PC-9 (cell line): ENCODE measurements at regions of chr1 and their contacts with region 1.

Region 1: GRCh38 chr1:208132287-208132883 is 111.8 kb downstream of the PLXNA2 start:
- DNase-seq: peak; percentile 75 to 90
- H3K4me3 ChIP-seq: peak overlapping the region; percentile 9; the same call in 1 of the 2 replicates
- H3K27ac ChIP-seq: peak overlapping the region; percentile 49
- H3K4me1 ChIP-seq: peaks cover 42% of the 10 kb centered on the region
- H3K27me3 ChIP-seq: no peaks in the 10 kb centered on the region
- CTCF ChIP-seq: peak; percentile 98

Region 2: DNA sequence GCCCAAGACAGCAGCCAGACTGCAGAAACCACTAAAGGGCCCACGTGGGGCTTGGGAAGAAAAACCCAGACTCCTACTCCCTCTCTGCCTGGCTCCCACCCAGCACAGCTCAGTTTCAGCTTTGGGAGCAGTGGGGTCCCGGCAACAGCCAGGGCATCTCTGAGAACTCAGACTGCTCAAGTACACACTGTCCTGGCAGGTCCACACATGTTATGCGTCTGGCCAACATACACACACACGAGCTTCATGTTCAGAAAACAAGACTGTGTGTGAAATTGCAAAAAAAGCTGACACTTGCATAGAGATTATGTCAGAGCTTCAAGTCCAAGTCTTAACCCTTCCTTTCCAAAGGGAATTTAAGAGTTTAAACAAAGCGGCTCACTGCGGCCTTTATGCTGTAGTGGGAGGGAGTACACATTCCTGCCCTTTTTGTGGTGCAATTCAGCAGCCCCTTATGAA is 84.9 kb before region 1 on chr1:
- CTCF ChIA-PET with region 1: no interaction called
- POLR2A ChIA-PET with region 1: no interaction called
- intact Hi-C with region 1: loop called (anchors 5 kb)
- DNase-seq: no peak
- H3K4me3 ChIP-seq: no peak overlapping the region
- H3K27ac ChIP-seq: no peak overlapping the region
- H3K4me1 ChIP-seq: peaks cover 37% of the 10 kb centered on the region
- H3K27me3 ChIP-seq: no peaks in the 10 kb centered on the region
- CTCF ChIP-seq: no peak

Region 3: DNA sequence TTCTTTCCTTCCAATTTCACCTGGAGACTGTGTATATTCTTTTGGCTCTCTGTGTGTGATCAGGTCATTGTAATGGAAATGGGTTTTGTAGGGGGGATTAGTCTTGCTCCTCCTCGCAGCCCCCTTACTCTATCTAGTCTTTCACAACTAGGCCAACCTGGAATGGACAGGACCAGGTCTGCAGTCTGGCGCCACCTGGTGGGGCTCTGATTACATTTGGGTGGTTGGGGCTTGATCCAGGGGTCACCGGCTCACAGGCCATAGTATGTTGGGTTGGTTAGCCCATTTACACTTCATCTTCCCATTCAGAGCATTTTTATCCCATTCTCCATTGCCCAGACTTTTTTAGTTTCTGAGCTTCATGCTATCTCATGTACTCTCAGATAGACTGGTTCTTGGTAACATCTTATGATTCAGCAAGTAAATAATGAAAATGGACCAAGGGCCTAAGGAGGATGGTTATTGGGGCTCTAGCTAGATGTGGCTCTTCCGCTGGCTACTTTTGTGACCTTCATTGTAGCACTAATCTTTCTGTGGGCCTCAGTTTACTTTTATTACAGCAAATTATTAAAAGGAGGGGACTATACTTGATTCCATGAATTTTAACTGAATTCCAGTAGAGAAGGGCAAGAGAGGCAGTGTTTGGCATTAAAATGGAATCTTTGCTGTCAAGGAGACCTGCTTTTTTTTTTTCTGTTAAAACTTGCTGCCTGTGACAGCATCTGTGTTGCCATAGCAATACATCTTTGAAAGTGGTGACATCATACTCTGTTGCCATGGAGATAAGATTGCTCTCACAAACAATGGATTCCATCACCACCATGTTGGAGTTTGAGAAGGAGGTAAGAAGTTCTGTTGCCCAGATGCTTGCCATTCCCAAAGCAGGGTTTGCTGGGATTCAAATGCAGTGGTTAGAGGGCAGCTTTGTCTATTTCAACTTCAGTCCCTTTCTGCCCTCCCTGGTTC is 38.3 kb before region 1 on chr1:
- CTCF ChIA-PET with region 1: no interaction called
- POLR2A ChIA-PET with region 1: no interaction called
- intact Hi-C with region 1: loop called (anchors 1 kb)
- DNase-seq: peak; percentile 51 to 53
- H3K4me3 ChIP-seq: no peak overlapping the region
- H3K27ac ChIP-seq: no peak overlapping the region
- H3K4me1 ChIP-seq: no peaks in the 10 kb centered on the region
- H3K27me3 ChIP-seq: no peaks in the 10 kb centered on the region
- CTCF ChIP-seq: peak; percentile 81

Region 4: DNA sequence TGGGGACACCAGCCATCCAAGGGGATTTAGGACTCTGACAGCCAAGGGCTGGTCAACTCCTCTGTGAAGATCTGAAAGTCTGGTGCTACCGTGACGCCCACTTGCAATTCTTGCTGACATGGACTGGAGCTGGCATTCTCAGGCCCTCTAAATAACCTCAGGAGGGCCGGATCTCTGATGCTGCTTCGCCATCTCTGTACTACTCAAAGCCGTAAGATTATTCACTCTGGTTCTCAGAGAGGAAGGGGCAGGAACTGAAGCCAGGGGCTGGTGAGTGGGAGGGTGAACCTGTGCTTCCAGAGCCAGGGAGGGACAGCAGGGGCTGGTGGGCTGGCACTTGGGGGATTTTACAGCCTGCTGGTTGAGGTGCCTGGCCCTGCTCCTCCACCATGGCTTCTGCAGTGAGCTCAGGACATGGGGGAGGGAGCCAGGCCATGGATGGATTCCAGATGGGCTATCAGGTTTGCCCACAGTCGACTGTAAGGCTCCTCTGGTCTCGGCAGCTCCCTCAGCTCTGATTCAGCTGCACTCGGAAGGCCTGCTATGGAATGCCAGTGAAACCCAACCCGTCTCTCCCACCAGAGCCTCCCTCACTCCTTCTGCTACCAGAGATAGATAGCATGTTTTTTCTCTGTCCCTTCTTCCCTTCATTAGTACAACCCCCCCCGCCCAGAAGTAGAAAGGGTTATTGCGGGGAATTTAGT is 27.3 kb after region 1 on chr1:
- CTCF ChIA-PET with region 1: interaction called, 7 read pairs
- POLR2A ChIA-PET with region 1: no interaction called
- intact Hi-C with region 1: loop called (anchors 1 kb)
- DNase-seq: no peak
- H3K4me3 ChIP-seq: no peak overlapping the region
- H3K27ac ChIP-seq: no peak overlapping the region
- H3K4me1 ChIP-seq: peaks cover 16% of the 10 kb centered on the region
- H3K27me3 ChIP-seq: no peaks in the 10 kb centered on the region
- CTCF ChIP-seq: no peak

Region 5: DNA sequence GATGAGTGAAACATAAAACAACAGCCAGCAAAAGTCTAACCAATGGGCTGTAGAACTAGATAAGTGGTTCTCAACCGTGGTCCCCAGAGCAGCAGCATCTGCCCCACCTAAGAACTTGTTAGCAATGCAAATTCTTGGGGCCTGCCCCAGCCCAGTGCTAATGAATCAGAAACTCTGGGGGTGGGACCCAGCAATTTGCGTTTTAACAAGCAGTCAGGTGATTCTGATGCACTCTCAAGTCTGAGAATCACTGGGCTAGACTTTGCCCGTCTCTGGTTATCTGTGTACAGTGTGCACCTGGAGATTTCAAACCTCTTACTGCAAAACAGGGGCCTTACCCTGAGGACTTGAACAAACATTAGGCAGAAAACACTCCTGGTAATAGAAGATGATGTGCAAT is 45.3 kb after region 1 on chr1:
- CTCF ChIA-PET with region 1: no interaction called
- POLR2A ChIA-PET with region 1: no interaction called
- intact Hi-C with region 1: loop called (anchors 1 kb)
- DNase-seq: peak in 1 of 2 experiments; percentile 37
- H3K4me3 ChIP-seq: no peak overlapping the region
- H3K27ac ChIP-seq: peak overlapping the region; percentile 78; the same call in 1 of the 2 replicates
- H3K4me1 ChIP-seq: peaks cover 64% of the 10 kb centered on the region
- H3K27me3 ChIP-seq: no peaks in the 10 kb centered on the region
- CTCF ChIP-seq: no peak